ENCODE measurements at regions of chr3 and their contacts with region 1.

Region 1: DNA sequence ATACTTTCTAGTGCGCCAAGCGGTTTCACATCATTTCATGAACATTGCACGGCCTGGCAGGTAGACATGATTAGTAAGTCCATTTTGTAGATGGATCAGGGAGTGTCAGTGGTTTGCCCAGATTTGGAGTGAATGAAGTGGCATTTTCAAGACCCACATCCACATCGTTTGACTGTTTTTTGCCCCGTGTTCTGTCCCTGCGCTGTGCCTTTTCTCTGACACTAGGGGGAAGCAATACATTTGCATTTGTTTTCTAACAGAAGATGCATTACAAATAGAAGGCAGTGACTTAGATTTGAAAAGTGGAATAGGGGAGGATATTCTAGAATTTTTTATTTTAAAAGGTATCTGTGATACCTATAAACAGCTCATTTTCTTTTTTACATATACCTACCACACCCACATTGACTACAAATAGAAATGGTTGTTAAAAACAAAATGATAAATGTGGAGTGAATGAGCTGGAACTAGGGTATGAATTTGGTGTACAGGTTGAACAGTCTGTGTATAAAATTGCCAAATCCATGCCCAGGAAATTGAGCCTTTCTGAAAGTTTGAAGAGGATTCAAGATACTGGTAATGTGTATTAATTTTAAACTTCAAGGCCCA is 98.0 kb downstream of the USP13 start:
- DNase-seq: peak; percentile 49
- H3K4me3 ChIP-seq: no peak overlapping the region; a peak in 1 of 4 replicates
- H3K27ac ChIP-seq: no peak overlapping the region
- H3K4me1 ChIP-seq: peaks cover 0 to 2% of the 10 kb centered on the region in 2 experiments; a peak in 1 of 4 replicates
- H3K27me3 ChIP-seq: no peaks in the 10 kb centered on the region
- CTCF ChIP-seq: peak; percentile 72
- EP300 ChIP-seq: no peak
- RAD21 ChIP-seq: peak; percentile 77

Region 2: GRCh38 chr3:179732661-179733348 is 18.0 kb before region 1 on chr3:
- CTCF ChIA-PET with region 1: interaction called, 55 read pairs
- POLR2A ChIA-PET with region 1: no interaction called
- DNase-seq: no peak
- H3K4me3 ChIP-seq: no peak overlapping the region
- H3K27ac ChIP-seq: no peak overlapping the region
- H3K4me1 ChIP-seq: no peaks in the 10 kb centered on the region
- H3K27me3 ChIP-seq: no peaks in the 10 kb centered on the region
- CTCF ChIP-seq: no peak
- EP300 ChIP-seq: no peak
- RAD21 ChIP-seq: no peak

Region 3: DNA sequence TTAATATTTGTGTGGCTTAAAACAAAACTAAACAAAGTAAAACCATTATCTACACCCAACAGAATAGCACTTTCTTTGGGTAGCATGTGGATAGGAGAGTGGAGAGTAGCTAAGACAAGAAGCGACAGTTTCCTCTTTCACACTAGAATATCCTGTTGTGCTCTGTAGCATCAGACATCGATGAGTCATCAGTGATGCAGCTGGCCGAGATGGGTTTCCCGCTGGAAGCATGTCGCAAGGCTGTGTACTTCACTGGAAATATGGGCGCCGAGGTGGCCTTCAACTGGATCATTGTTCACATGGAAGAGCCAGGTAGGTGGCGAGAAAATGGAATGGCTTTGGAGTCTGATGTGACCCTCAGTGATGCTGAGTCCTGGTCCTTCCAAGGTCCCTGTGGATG is 10.1 kb after region 1 on chr3:
- CTCF ChIA-PET with region 1: interaction called, 23 read pairs
- POLR2A ChIA-PET with region 1: no interaction called
- DNase-seq: no peak
- H3K4me3 ChIP-seq: no peak overlapping the region
- H3K27ac ChIP-seq: no peak overlapping the region
- H3K4me1 ChIP-seq: peaks cover 13 to 20% of the 10 kb centered on the region in 2 experiments
- H3K27me3 ChIP-seq: no peaks in the 10 kb centered on the region
- CTCF ChIP-seq: no peak
- EP300 ChIP-seq: no peak
- RAD21 ChIP-seq: no peak

Region 4: GRCh38 chr3:179768080-179768479 is 17.3 kb after region 1 on chr3:
- CTCF ChIA-PET with region 1: interaction called, 25 read pairs
- POLR2A ChIA-PET with region 1: no interaction called
- DNase-seq: peak; percentile 79
- H3K4me3 ChIP-seq: peak overlapping the region in 1 of 2 experiments; percentile 47; a peak in 1 of 4 replicates
- H3K27ac ChIP-seq: peak overlapping the region in 1 of 2 experiments; percentile 29; a peak in 2 of 4 replicates
- H3K4me1 ChIP-seq: peaks cover 20 to 46% of the 10 kb centered on the region in 2 experiments
- H3K27me3 ChIP-seq: no peaks in the 10 kb centered on the region
- CTCF ChIP-seq: peak; percentile 84
- EP300 ChIP-seq: peak; percentile 39 to 65; a peak in 2 of 4 replicates
- RAD21 ChIP-seq: peak; percentile 77

Region 5: GRCh38 chr3:179811321-179812095 is 60.7 kb after region 1 on chr3:
- CTCF ChIA-PET with region 1: interaction called, 15 read pairs
- POLR2A ChIA-PET with region 1: no interaction called
- DNase-seq: peak; percentile 73
- H3K4me3 ChIP-seq: peak overlapping the region in 1 of 2 experiments; percentile 27; a peak in 1 of 4 replicates
- H3K27ac ChIP-seq: peak overlapping the region in 1 of 2 experiments; percentile 86; a peak in 2 of 4 replicates
- H3K4me1 ChIP-seq: no peaks in the 10 kb centered on the region
- H3K27me3 ChIP-seq: no peaks in the 10 kb centered on the region
- CTCF ChIP-seq: peak; percentile 73
- EP300 ChIP-seq: 0 out of 4 replicates have a peak, but pooled peaks of 1 of the 2 experiments have one; percentile 6
- RAD21 ChIP-seq: peak; percentile 91